ENCODE measurements at regions of chr1 and their contacts with region 1.

Region 1: DNA sequence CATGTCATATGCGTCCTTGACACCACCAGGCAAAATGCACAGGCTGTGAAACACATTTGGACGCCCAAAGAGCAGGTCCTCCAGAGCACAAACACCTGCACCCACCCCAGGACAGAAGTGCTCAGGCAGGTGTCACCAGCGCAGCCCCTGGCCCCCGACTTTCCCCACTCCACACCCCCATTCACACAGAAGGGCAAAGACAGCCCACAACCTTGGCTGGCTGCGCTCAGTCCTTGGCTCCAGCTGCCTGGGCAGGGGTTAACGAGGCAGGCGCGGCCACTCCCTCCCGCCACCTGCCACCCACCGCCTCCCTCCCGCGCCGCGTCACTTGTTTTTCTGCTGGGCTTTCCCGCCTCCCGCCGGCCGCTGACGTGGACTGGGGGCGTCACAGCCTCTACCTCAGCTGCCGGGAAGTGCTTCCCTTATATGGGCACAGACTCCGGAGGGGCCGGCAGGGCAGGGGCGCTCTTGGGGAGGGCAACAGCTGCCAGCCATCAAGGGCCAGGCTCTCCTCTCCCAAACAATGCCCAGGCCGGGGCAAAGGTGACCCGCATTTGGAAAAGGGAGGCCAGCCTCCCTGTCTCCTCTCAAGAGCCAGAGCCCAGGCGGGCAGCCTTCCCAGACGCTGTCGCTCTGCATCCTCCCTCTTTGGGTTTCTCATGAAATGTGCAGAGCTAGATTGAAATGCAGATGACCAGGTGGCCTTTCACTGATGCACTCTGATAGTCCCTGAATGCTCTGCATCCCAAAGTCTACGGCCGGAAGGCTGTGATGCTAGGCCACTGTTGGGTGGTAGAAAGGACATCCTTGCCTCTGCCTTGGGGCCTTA is 14.8 kb upstream of the BTG2 start:
- DNase-seq: peak; percentile 97 to 98
- ATAC-seq: peak; percentile 58 to 76 (median 64)
- H3K4me3 ChIP-seq: peak overlapping the region; percentile 21
- H3K4me3 Mint-ChIP-seq: peak overlapping the region; percentile 81
- H3K27ac ChIP-seq: peak overlapping the region; percentile 98
- H3K27ac Mint-ChIP-seq: peak overlapping the region; percentile 99
- H3K4me1 ChIP-seq: peaks cover 66% of the 10 kb centered on the region
- H3K4me1 Mint-ChIP-seq: peaks cover 69 to 70% of the 10 kb centered on the region in 2 donors
- H3K27me3 ChIP-seq: no peaks in the 10 kb centered on the region
- H3K27me3 Mint-ChIP-seq: no peaks in the 10 kb centered on the region
- CTCF ChIP-seq: no peak

Region 2: GRCh38 chr1:203304919-203305808 is 14.7 kb after region 1 on chr1 and contains the start of gene BTG2:
- intact Hi-C with region 1: loop called (anchors 1 kb)
- DNase-seq: peak; percentile 95 to 97
- ATAC-seq: peak; percentile 77 to 92 (median 82)
- H3K4me3 ChIP-seq: peak within 1 kb of the TSS; percentile 99
- H3K4me3 Mint-ChIP-seq: peak within 1 kb of the TSS; percentile 89
- H3K27ac ChIP-seq: peak within 1 kb of the TSS; percentile 97
- H3K27ac Mint-ChIP-seq: peak within 1 kb of the TSS; percentile 98 to 99
- H3K4me1 ChIP-seq: peaks cover 78% of the 10 kb centered on the region
- H3K4me1 Mint-ChIP-seq: peaks cover 75 to 77% of the 10 kb centered on the region in 2 donors
- H3K27me3 ChIP-seq: no peaks in the 10 kb centered on the region
- H3K27me3 Mint-ChIP-seq: no peaks in the 10 kb centered on the region
- CTCF ChIP-seq: no peak
- total RNA-seq, gene BTG2: 499 to 1,024 (median 851) TPM

Region 3: DNA sequence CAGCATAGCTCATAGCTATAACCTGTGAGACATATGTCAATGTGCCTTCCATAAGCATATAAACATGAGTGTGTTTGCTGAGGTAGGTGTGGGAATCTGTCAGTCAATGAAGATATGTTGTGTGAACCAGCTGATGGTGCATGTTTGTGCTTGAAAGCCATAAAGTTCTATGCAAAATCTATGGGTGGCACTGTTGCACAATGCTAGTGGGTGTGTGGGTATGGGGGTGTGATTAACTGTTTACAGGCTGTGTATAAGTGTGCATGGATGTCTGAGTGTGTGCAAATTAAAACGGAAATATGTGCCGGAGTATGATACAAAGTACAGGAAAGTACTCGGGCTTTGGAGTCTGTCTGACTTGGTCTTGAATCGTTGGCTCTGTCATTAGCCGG is 335.1 kb after region 1 on chr1:
- intact Hi-C with region 1: loop called (anchors 5 kb)
- DNase-seq: peak; percentile 55 to 90
- ATAC-seq: peak; percentile 58 to 82 (median 74)
- H3K4me3 ChIP-seq: peak overlapping the region; percentile 86
- H3K4me3 Mint-ChIP-seq: peak overlapping the region; percentile 98
- H3K27ac ChIP-seq: peak overlapping the region; percentile 84
- H3K27ac Mint-ChIP-seq: peak overlapping the region; percentile 85 to 95
- H3K4me1 ChIP-seq: peaks cover 42% of the 10 kb centered on the region
- H3K4me1 Mint-ChIP-seq: peaks cover 48 to 58% of the 10 kb centered on the region in 2 donors
- H3K27me3 ChIP-seq: no peaks in the 10 kb centered on the region
- H3K27me3 Mint-ChIP-seq: no peaks in the 10 kb centered on the region
- CTCF ChIP-seq: peak; percentile 63

Region 4: GRCh38 chr1:203673550-203674427 is 383.3 kb after region 1 on chr1:
- intact Hi-C with region 1: loop called (anchors 5 kb)
- DNase-seq: peak; percentile 70 to 91
- ATAC-seq: peak; percentile 75 to 91 (median 81)
- H3K4me3 ChIP-seq: no peak overlapping the region
- H3K4me3 Mint-ChIP-seq: peak overlapping the region; percentile 90
- H3K27ac ChIP-seq: peak overlapping the region; percentile 81
- H3K27ac Mint-ChIP-seq: peak overlapping the region; percentile 93 to 99
- H3K4me1 ChIP-seq: peaks cover 64% of the 10 kb centered on the region
- H3K4me1 Mint-ChIP-seq: peaks cover 76 to 89% of the 10 kb centered on the region in 2 donors
- H3K27me3 ChIP-seq: no peaks in the 10 kb centered on the region
- H3K27me3 Mint-ChIP-seq: no peaks in the 10 kb centered on the region
- CTCF ChIP-seq: peak; percentile 50

Measured in natural killer cell (primary cell).